ENCODE measurements at regions of chr13 and their contacts with region 1.

Region 1: GRCh38 chr13:99176309-99177276 is 24.1 kb upstream of the UBAC2 start:
- DNase-seq: peak; percentile 82
- ATAC-seq: peak; percentile 84

Region 2: DNA sequence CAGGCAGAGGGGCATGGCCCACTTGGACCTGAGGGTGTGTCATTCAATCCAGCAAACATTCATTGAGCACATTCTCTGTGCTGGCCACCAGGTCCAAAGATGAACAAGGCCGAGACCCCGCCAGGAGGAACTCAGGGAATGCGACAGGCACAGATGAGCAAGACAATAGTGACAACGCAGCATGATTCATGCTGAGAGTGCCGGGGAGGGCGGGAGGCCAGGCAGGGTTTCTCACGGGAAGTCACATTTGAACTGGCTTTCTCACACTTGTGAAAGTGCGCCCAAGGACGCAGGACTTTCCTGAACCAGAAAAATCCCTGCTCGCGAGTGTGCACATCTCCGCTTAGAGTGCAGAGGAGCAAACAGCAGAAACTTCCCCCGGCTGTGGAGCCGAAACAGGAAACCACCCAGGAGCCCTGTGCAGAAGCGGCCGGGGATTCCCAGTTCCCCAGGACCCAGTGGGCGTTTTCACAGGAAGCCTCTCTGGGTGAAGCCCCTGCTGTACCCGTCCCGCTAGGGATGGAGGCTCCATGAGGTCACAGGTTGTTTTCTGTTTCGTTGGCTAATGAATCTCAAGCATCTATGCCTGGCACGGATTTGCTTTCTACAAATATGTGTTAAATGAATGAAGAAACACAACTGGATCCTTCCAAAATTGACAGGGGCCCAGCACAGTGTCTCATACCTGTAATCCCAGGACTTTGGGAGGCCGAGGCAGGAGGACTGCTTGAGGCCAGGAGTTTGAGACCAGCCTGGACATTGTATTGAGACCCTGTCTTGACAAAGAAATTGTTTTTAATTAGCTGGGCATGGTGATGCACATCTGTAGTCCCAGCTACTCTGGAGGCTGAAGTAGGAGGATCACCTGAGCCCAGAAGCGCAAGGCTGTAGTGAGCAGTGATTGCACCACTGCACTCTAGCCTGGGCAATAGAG is 256.3 kb after region 1 on chr13:
- intact Hi-C with region 1: loop called (anchors 5 kb)
- DNase-seq: peak; percentile 77
- ATAC-seq: peak; percentile 76